Panc1 (cell line): ENCODE measurements at regions of chr11 and their contacts with region 1.

Region 1: GRCh38 chr11:76807206-76807875 is 24.2 kb downstream of the TSKU start:
- DNase-seq: peak; percentile 47
- ATAC-seq: peak; percentile 96
- H3K4me3 ChIP-seq: peak overlapping the region in 1 of 2 experiments; percentile 29; a peak in 2 of 4 replicates
- H3K27ac ChIP-seq: no peak overlapping the region
- H3K4me1 ChIP-seq: 0 out of 2 replicates have a peak, but pooled peaks cover 4% of the 10 kb centered on the region
- H3K27me3 ChIP-seq: no peaks in the 10 kb centered on the region
- CTCF ChIP-seq: peak; percentile 95

Region 2: DNA sequence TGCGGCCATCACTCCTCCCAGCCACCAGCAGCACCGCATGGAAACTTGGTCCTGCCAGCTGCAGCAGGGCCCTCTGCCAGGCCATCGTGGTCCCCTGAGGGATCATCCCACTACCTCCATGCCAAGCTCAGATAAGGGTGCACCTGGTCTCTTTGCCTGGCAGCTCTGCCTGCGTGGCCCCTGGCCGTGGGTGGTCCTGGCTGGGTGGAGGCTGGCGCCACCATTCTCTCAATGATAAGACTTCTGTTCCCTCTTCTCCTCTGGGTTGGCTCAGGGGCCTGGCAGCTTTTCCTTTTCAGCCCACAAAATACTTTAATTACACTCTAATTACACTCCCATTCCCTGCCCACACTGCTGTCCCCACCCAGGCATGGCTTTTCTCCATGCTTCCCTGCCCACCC is 51.0 kb before region 1 on chr11:
- CTCF ChIA-PET with region 1: no interaction called
- POLR2A ChIA-PET with region 1: no interaction called
- in situ Hi-C with region 1: no loop called
- intact Hi-C with region 1: no loop called
- DNase-seq: no peak
- ATAC-seq: no peak
- H3K4me3 ChIP-seq: no peak overlapping the region
- H3K27ac ChIP-seq: no peak overlapping the region
- H3K4me1 ChIP-seq: no peaks in the 10 kb centered on the region
- H3K27me3 ChIP-seq: no peaks in the 10 kb centered on the region
- CTCF ChIP-seq: no peak

Region 3: DNA sequence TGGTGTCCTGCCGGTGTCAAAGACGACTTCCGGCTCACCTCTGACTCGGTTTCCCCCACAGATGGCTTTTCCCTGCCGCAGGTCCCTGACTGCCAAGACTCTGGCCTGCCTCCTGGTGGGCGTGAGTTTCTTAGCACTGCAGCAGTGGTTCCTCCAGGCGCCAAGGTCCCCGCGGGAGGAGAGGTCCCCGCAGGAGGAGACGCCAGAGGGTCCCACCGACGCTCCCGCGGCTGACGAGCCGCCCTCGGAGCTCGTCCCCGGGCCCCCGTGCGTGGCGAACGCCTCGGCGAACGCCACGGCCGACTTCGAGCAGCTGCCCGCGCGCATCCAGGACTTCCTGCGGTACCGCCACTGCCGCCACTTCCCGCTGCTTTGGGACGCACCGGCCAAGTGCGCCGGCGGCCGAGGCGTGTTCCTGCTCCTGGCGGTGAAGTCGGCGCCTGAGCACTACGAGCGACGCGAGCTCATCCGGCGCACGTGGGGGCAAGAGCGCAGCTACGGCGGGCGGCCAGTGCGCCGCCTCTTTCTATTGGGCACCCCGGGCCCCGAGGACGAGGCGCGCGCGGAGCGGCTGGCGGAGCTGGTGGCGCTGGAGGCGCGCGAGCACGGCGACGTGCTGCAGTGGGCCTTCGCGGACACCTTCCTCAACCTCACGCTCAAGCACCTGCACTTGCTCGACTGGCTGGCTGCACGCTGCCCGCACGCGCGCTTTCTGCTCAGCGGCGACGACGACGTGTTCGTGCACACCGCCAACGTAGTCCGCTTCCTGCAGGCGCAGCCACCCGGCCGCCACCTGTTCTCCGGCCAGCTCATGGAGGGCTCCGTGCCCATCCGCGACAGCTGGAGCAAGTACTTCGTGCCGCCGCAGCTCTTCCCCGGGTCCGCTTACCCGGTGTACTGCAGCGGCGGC is 232.4 kb after region 1 on chr11:
- CTCF ChIA-PET with region 1: no interaction called
- POLR2A ChIA-PET with region 1: no interaction called
- in situ Hi-C with region 1: no loop called
- intact Hi-C with region 1: loop called (anchors 5 kb)
- DNase-seq: no peak
- ATAC-seq: peak; percentile 75
- H3K4me3 ChIP-seq: peak overlapping the region; percentile 43 to 59
- H3K27ac ChIP-seq: peak overlapping the region; percentile 18; the same call in 1 of the 2 replicates
- H3K4me1 ChIP-seq: peaks cover 28% of the 10 kb centered on the region
- H3K27me3 ChIP-seq: no peaks in the 10 kb centered on the region
- CTCF ChIP-seq: peak; percentile 92